Activated T-helper 1 cell treated with anti-CD3 and anti-CD28 coated beads, Interleukin-12 subunit alpha, Interleukin-12 subunit beta, Interleukin-2, Interleukin-4 antibody, amounts not matched to agents 30 ng/mL and 10 ng/mL and 1 ng/mL, durations not matched to agents 14 hours and 24 hours and 36 hours (primary cell): ENCODE measurements at regions of chr10 and their contacts with region 1.

Region 1: GRCh38 chr10:17023386-17024298 is 106.0 kb downstream of the CUBN start:
- DNase-seq: peak; percentile 77
- H3K4me3 Mint-ChIP-seq: peak overlapping the region; percentile 61
- H3K27ac Mint-ChIP-seq: peak overlapping the region; percentile 99
- H3K4me1 Mint-ChIP-seq: peaks cover 61% of the 10 kb centered on the region
- H3K27me3 Mint-ChIP-seq: peaks cover 4% of the 10 kb centered on the region

Region 2: DNA sequence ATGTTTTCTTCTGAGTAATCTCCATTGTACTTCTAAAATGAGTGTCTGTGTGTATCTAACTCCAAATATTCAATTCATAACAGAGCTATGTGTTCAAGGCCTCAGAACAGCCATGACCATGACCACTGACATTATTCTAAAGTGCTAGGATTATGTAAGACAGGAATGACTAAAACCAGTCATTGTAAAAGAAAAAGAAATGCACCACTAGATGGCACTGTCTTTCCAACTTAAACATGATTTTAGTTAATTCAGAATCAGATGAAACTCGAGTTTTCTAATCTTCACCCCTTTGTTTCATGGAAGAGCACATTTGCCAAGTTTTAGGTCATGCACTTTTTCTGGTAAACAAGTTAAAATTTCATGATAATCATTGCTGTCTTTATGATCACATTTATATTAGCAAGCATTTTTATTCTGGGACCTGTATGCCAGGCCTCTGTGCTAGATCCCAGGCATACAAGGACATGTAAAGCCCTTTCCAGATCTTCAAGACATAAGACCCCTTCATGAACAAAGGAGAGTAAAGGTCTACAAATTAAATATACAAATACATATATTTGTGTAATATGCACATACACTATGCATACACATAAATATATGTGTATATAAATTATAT is 180.3 kb before region 1 on chr10:
- intact Hi-C with region 1: loop called (anchors 2 kb)
- DNase-seq: no peak
- H3K4me3 Mint-ChIP-seq: no peak overlapping the region
- H3K27ac Mint-ChIP-seq: no peak overlapping the region
- H3K4me1 Mint-ChIP-seq: no peaks in the 10 kb centered on the region
- H3K27me3 Mint-ChIP-seq: peaks cover 2% of the 10 kb centered on the region

Region 3: GRCh38 chr10:16904639-16905061 is 119.0 kb before region 1 on chr10:
- intact Hi-C with region 1: loop called (anchors 1 kb)
- DNase-seq: no peak
- H3K4me3 Mint-ChIP-seq: no peak overlapping the region
- H3K27ac Mint-ChIP-seq: no peak overlapping the region
- H3K4me1 Mint-ChIP-seq: peaks cover 9% of the 10 kb centered on the region
- H3K27me3 Mint-ChIP-seq: peaks cover 7% of the 10 kb centered on the region

Region 4: DNA sequence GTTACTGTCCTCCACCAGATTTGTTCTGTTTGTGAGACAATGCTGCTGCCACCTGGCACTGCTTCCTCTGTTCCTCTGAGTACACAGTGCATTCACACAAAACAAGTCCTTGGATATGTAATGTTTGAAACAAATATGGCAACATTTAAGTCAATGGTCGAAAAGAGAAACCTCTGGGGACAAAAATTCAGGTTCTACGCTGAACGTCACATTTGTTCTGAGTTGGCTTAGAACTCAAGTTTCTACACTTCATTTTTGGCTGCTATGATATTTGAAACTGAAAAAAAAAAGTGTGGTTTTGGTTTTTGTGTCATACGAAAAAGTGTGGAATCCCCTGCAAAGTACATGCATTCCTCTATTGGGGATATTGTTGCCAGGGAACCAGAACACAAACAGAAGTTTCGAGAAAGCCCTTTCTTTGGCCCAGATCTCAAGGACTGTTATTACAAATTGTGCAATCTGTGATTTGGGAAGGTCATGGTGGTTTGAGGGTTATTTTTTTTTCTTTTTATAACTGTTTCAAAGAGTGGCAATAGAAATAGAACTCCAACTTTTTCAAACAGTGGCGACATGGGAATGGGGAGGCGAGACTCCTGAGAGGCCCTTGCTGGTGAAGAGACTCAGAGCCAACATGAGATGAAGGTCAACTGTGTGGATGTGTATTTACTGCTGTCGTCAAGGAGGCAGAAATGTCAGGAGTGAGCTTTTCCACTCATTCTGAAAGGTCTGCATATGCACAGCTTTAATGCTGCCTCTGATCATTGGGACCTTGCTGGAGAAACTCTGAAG is 21.5 kb before region 1 on chr10:
- intact Hi-C with region 1: loop called (anchors 1 kb)
- DNase-seq: peak; percentile 42
- H3K4me3 Mint-ChIP-seq: peak overlapping the region; percentile 64
- H3K27ac Mint-ChIP-seq: peak overlapping the region; percentile 98
- H3K4me1 Mint-ChIP-seq: peaks cover 43% of the 10 kb centered on the region
- H3K27me3 Mint-ChIP-seq: peaks cover 49% of the 10 kb centered on the region

Region 5: DNA sequence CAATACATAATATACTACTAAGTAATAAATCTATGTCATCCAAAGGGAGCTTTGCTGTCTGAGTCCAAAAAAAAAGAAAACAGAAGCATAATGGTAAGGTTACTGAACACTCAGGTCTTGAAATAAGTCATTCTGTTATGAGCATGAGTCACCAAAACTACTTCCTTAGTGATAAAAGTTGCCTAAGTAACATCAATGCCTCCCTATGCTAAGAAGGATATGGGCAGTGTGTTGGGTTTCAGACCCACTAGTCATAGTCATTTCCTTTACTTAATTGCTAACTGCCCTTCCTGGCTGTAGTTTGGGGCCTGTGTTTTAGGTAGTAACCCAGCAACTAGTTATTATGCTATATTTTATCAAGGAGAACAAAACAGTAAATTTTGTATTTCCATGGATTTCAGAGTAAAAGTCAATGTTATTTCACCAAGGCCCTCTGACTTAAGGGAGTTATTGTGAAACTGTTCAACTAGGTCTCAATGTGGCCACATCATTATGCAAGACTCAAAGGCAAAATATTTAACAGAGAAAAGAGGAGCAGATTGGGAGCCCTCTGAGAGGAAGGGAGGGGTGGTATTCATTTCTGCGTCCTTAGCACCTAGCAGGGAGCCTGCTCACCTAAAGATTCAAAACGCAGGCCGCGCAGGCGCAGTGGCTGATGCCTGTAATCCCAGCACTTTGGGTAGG is 192.7 kb after region 1 on chr10:
- intact Hi-C with region 1: loop called (anchors 1 kb)
- DNase-seq: peak; percentile 34
- H3K4me3 Mint-ChIP-seq: peak overlapping the region; percentile 45
- H3K27ac Mint-ChIP-seq: peak overlapping the region; percentile 98
- H3K4me1 Mint-ChIP-seq: peaks cover 51% of the 10 kb centered on the region
- H3K27me3 Mint-ChIP-seq: no peaks in the 10 kb centered on the region

Region 6: GRCh38 chr10:17435187-17435586 is 411.5 kb after region 1 on chr10:
- intact Hi-C with region 1: no loop called
- DNase-seq: no peak
- H3K4me3 Mint-ChIP-seq: no peak overlapping the region
- H3K27ac Mint-ChIP-seq: no peak overlapping the region
- H3K4me1 Mint-ChIP-seq: peaks cover 15% of the 10 kb centered on the region
- H3K27me3 Mint-ChIP-seq: peaks cover 14% of the 10 kb centered on the region

Region 7: DNA sequence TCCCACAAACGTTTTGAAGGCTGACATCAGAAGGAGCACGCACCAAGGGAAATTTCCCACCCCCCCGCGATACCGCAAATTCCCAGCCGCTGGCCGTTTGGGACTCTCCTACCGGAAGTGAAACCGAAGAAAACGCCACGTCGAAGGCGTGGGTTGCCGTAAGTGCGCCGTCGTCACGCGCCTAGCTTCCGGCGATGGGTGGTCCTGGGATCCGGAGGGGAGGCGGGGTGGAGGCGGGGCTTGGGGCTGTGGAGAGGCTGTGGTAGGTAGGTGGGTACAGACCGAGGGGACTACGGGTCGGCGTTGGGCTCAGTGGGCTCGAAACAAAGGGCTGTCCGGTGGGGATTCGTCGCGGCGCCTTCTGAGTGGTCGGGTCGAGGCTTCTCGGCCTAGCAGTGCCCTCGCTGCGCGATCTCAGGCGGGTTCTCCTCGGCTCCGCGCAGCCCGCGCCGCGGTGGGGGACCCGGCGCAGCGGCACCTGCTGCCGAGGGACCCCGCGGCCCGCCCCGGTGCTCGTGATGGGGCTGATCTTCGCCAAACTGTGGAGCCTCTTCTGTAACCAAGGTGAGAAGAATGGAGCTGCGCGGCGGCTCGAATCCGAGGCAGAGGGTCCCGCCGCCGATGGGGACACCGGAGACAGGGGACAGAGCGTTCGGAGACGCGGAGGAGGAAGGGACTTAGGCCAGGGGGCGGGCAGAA is 1635.6 kb after region 1 on chr10 and contains the start of gene ARL5B:
- intact Hi-C with region 1: loop called (anchors 10 kb)
- DNase-seq: peak; percentile 92
- H3K4me3 Mint-ChIP-seq: peak within 1 kb of the TSS; percentile 100
- H3K27ac Mint-ChIP-seq: peak within 1 kb of the TSS; percentile 98
- H3K4me1 Mint-ChIP-seq: peaks cover 38% of the 10 kb centered on the region
- H3K27me3 Mint-ChIP-seq: no peaks in the 10 kb centered on the region
- total RNA-seq, gene ARL5B: 14.4 and 15.2 TPM in 2 replicates